ENCODE measurements at regions of chr9 and their contacts with region 1.

Region 1: DNA sequence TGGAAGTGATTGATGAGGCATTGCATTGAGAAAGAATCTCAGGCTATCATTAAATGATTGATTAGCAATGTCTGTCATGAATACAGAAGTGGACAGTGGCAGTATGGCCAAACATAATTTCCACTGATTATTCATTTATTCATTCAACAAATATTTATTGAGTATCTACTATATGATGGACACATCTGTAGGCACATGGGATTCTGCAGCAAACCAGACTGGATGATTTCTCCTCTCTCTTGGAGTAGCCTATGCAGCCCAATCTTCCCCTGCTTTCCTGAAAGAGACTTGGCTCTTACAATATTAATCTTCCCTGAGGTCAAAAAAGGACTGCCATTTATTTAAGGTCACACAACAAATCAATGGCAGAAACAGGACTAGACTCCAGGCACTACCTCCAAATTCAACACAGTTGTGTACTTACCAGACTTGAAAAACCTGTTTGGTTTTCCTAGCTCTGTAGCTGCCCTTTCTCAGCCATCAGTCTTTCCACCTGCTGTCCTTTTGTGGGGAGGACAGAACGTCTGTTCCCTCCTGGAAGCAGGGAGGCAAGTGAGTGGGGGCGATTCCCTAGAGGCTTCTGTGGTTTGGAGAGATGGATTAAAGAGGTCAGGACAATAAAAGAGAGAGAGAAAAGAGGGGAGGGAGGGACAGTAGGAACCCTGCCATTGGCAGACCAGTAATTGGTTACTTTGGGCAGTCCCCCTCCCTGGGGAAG is 14.9 kb downstream of the ASTN2 start:
- DNase-seq: no peak
- ATAC-seq: no peak
- H3K4me3 ChIP-seq: no peak overlapping the region
- H3K27ac ChIP-seq: no peak overlapping the region
- H3K4me1 ChIP-seq: no peaks in the 10 kb centered on the region
- CTCF ChIP-seq: no peak
- EP300 ChIP-seq: no peak
- POLR2A ChIP-seq: no peak
- RAD21 ChIP-seq: no peak

Region 2: GRCh38 chr9:117258184-117258866 is 141.7 kb before region 1 on chr9:
- CTCF ChIA-PET with region 1: no interaction called
- POLR2A ChIA-PET with region 1: no interaction called
- DNase-seq: no peak
- ATAC-seq: no peak
- H3K4me3 ChIP-seq: no peak overlapping the region
- H3K27ac ChIP-seq: no peak overlapping the region
- H3K4me1 ChIP-seq: no peaks in the 10 kb centered on the region
- CTCF ChIP-seq: no peak
- EP300 ChIP-seq: no peak
- POLR2A ChIP-seq: no peak
- RAD21 ChIP-seq: no peak

Region 3: DNA sequence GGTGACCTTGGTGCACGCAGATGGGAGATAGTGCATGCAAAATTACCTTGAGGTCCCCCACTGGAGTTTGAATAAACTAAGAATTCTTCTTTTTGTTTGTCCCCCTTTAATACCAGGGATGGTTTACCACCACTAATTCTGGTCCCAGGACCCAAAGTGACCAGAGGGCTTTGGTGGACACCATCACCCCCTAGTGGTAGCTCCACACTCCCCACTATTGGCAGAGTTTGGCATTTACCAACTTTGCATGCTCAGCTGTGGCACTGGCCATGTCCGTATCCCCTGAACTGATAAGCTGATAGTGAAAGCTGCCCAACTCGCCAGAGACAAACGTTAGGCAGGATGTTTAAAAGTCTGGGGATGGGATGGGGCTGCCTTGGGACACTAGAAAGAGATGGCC is 11.5 kb after region 1 on chr9:
- CTCF ChIA-PET with region 1: interaction called, 15 read pairs
- POLR2A ChIA-PET with region 1: no interaction called
- DNase-seq: peak; percentile 50 to 51
- ATAC-seq: peak; percentile 46 to 81; a peak in 4 of 6 replicates
- H3K4me3 ChIP-seq: no peak overlapping the region
- H3K27ac ChIP-seq: no peak overlapping the region
- H3K4me1 ChIP-seq: peaks cover 13% of the 10 kb centered on the region
- CTCF ChIP-seq: peak; percentile 43; the same call in 2 of the 3 replicates
- EP300 ChIP-seq: no peak
- POLR2A ChIP-seq: no peak
- RAD21 ChIP-seq: peak; percentile 27 to 59; a peak in 4 of 5 replicates